Left cardiac atrium (tissue), 4 donors: ENCODE measurements at regions of chr4 and their contacts with region 1.

Region 1: GRCh38 chr4:52038103-52038912 is at the start of gene SGCB:
- DNase-seq: peak; percentile 77
- ATAC-seq: peak; percentile 95 to 97
- total RNA-seq, gene SGCB: 73.0 to 74.5 TPM

Region 2: DNA sequence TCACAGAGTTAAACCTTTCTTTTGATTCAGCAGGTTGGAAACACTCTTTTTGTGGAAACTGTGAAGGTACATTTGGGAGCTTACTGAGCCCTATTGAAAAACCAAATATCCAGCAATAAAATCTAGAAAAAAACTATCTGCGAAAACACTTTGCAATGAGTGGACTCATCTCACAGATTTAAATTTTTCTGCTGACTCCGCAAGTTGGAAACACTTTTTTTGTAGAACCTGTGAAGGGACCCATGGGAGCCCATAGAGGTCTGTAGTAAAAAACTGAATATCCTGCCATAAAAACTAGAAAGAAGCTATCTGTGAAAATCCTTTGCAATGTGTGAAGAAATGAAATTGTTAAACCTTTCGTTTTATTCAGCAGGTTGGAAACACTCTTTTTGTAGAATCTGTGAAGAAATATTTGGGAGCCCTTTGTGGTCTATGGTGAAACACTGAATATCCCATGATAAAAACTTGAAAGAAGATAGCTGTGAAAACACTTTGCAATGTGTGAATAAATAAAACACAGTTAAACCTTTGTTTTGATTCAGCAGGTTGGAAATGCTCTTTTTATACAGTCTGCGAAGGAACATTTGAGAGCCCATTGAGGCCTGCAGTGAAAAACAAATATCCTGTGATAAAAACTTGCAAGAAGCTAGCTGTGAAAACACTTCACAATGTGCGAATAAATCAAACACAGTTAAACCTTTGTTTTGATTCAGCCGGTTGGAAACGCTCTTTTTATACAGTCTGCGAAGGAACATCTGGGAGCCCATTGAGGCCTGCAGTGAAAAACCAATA is 217.7 kb before region 1 on chr4:
- intact Hi-C with region 1: no loop called
- DNase-seq: no peak
- ATAC-seq: no peak

Region 3: GRCh38 chr4:51842554-51843308 is 195.6 kb before region 1 on chr4 and contains the start of gene DCUN1D4:
- intact Hi-C with region 1: loop called in 1 of 2 experiments (anchors 5 kb)
- DNase-seq: peak; percentile 100
- ATAC-seq: peak; percentile 92 to 96
- total RNA-seq, gene DCUN1D4: 49.1 to 50.9 TPM